A673 (cell line): ENCODE measurements at regions of chr2 and their contacts with region 1.

Region 1: GRCh38 chr2:197145471-197146138 is 165.0 kb downstream of the ANKRD44 start:
- DNase-seq: peak; percentile 61
- H3K4me3 ChIP-seq: no peak overlapping the region
- H3K27ac ChIP-seq: peak overlapping the region; percentile 49
- H3K4me1 ChIP-seq: peaks cover 27% of the 10 kb centered on the region
- H3K27me3 ChIP-seq: no peaks in the 10 kb centered on the region
- CTCF ChIP-seq: no peak

Region 2: DNA sequence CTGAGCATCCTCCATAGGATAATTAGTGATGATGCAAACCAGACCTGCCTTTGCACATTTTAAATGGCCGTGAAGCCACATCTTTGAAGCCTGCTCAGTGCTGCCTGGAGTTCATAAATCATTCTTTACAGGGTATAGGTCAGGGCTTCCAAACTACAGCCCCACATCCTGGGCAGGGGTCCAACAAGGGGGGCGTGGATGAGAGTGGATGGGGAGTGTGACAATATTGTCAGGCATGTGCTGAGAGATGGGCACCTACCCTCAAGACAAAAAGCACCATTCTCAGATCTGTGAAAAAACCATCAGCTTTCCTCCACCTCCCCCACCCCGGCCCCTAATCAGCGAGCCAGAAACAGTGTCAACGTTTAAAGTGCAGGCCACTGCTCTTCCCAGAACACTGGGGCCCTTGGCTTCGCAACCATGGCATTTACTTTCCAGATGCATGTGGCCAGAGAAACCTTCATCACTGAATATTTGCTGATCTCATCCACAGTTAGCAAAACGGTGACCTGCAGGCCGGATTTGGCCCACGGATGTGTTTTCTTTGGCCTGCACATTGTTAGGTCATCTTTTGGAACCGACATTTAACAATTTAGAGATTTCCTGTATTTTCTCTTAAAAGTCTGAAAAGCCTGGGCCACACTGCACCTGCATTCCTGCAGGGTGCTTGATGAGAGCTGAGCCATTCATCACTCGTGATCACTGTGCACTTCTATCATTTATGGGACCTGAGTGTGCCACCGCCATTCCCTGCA is 34.3 kb after region 1 on chr2:
- CTCF ChIA-PET with region 1: no interaction called
- POLR2A ChIA-PET with region 1: no interaction called
- intact Hi-C with region 1: no loop called
- DNase-seq: no peak
- H3K4me3 ChIP-seq: no peak overlapping the region
- H3K27ac ChIP-seq: no peak overlapping the region
- H3K4me1 ChIP-seq: peaks cover 1% of the 10 kb centered on the region
- H3K27me3 ChIP-seq: no peaks in the 10 kb centered on the region
- CTCF ChIP-seq: no peak

Region 3: DNA sequence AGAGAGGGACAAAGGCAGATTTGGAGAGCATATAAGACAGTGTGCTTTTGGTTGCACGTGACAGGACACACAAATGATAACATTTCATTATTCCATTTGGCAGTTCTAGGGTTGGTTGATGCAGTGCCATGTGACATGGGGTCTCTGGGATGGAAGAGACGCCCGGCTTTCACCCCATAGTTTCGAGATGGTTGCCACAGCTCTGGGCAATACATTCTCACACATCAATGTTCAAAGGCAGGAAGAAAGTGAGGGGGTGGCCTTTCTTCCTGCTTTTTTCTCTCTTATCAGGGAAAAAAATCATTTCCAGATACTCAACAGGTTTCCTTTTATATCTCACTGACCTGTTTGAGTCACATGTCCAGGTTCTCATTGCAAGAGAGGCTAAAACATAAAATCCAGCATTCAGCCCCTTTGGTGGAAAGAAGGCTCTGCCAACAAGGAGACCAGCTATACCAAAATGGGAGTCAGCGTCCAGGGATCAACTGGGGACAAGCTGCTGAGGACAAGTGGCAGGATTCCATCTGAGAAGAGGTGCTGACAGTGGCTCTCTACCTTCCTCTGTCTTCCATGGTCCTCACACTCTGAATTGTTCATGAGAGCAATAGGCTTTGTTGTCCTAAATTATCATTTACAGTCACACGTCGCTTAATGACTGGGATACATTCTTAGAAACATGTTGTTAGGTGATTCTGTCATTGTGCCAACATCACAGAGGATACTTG is 194.1 kb after region 1 on chr2:
- CTCF ChIA-PET with region 1: interaction called, 16 read pairs
- POLR2A ChIA-PET with region 1: no interaction called
- intact Hi-C with region 1: no loop called
- DNase-seq: no peak
- H3K4me3 ChIP-seq: no peak overlapping the region
- H3K27ac ChIP-seq: no peak overlapping the region
- H3K4me1 ChIP-seq: no peaks in the 10 kb centered on the region
- H3K27me3 ChIP-seq: no peaks in the 10 kb centered on the region
- CTCF ChIP-seq: no peak

Region 4: GRCh38 chr2:197360744-197361156 is 215.1 kb after region 1 on chr2:
- CTCF ChIA-PET with region 1: no interaction called
- POLR2A ChIA-PET with region 1: no interaction called
- intact Hi-C with region 1: no loop called
- DNase-seq: peak; percentile 35
- H3K4me3 ChIP-seq: no peak overlapping the region
- H3K27ac ChIP-seq: no peak overlapping the region
- H3K4me1 ChIP-seq: no peaks in the 10 kb centered on the region
- H3K27me3 ChIP-seq: no peaks in the 10 kb centered on the region
- CTCF ChIP-seq: no peak